HepG2 (cell line): ENCODE measurements at regions of chr14 and their contacts with region 1.

Region 1: GRCh38 chr14:87205811-87206210 is 787.2 kb downstream of the GALC start:
- DNase-seq: no peak
- ATAC-seq: no peak
- H3K4me3 ChIP-seq: no peak overlapping the region
- H3K27ac ChIP-seq: no peak overlapping the region
- H3K4me1 ChIP-seq: no peaks in the 10 kb centered on the region
- H3K27me3 ChIP-seq: no peaks in the 10 kb centered on the region
- CTCF ChIP-seq: no peak
- EP300 ChIP-seq: no peak
- POLR2A ChIP-seq: no peak
- RAD21 ChIP-seq: no peak

Region 2: GRCh38 chr14:87122166-87122565 is 83.6 kb before region 1 on chr14:
- CTCF ChIA-PET with region 1: no interaction called
- POLR2A ChIA-PET with region 1: no interaction called
- in situ Hi-C with region 1: no loop called
- intact Hi-C with region 1: loop called (anchors 10 kb)
- DNase-seq: no peak
- ATAC-seq: no peak
- H3K4me3 ChIP-seq: no peak overlapping the region
- H3K27ac ChIP-seq: no peak overlapping the region
- H3K4me1 ChIP-seq: no peaks in the 10 kb centered on the region
- H3K27me3 ChIP-seq: no peaks in the 10 kb centered on the region
- CTCF ChIP-seq: no peak
- EP300 ChIP-seq: no peak
- POLR2A ChIP-seq: no peak
- RAD21 ChIP-seq: no peak